ENCODE measurements at regions of chr5 and their contacts with region 1.

Region 1: GRCh38 chr5:137220523-137220927 is 278.6 kb downstream of the SPOCK1 start:
- DNase-seq: peak; percentile 75
- H3K4me3 ChIP-seq: no peak overlapping the region
- H3K27ac ChIP-seq: no peak overlapping the region
- H3K4me1 ChIP-seq: no peaks in the 10 kb centered on the region
- CTCF ChIP-seq: peak; percentile 85

Region 2: GRCh38 chr5:136802383-136802782 is 418.1 kb before region 1 on chr5:
- CTCF ChIA-PET with region 1: interaction called, 3 read pairs
- POLR2A ChIA-PET with region 1: no interaction called
- intact Hi-C with region 1: loop called (anchors 1 kb)
- DNase-seq: peak; percentile 34
- H3K4me3 ChIP-seq: no peak overlapping the region
- H3K27ac ChIP-seq: no peak overlapping the region
- H3K4me1 ChIP-seq: no peaks in the 10 kb centered on the region
- CTCF ChIP-seq: peak; percentile 71

Region 3: DNA sequence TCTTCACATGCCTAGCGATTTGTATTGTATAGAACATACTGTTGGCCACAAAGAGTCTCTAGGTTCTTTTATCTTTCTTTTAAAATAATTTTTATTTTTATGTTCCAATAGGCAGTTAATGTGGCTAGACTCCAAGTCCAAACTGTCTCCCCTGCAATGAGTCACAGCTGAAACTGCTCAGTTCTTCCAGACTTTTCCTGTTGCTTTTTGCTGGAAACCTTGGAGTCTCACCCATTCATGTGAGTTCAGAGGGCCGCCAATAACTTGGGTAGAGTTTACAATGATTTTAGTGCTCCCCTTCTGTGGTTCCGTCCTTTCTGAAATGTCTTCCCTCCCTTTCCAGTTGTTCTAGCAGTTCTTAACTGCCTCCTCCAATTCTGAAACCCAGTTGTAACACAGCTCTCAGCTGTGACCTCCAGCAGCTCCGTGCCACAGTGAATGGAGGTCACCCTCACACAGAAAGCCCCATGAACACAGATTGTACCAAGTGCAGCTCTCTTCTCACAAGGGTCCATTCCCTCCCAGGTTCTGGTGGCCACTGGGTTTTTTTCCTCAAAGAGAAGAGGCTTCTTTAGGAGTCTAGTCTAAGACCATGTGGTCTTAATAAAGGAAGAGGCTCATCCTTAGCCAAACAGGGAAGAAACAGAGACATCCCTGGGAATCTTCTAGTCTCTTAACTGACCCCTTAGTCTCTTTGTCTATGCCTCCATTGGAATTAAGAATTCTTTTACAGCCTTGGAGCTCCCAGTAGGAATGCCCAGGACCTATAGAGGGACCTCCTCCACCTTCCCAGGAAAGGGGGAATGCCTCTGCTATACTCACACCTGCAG is 80.1 kb after region 1 on chr5:
- CTCF ChIA-PET with region 1: no interaction called
- POLR2A ChIA-PET with region 1: no interaction called
- intact Hi-C with region 1: no loop called
- DNase-seq: no peak
- H3K4me3 ChIP-seq: no peak overlapping the region
- H3K27ac ChIP-seq: no peak overlapping the region
- H3K4me1 ChIP-seq: no peaks in the 10 kb centered on the region
- CTCF ChIP-seq: no peak

Measured in OCI-LY7 (cell line).